ENCODE measurements at regions of chr4 and their contacts with region 1.

Region 1: GRCh38 chr4:17614416-17615299 is at the start of gene MED28:
- DNase-seq: peak; percentile 93
- H3K4me3 Mint-ChIP-seq: peak within 1 kb of the TSS; percentile 96
- H3K27ac Mint-ChIP-seq: peak within 1 kb of the TSS; percentile 97
- H3K4me1 Mint-ChIP-seq: peaks cover 32% of the 10 kb centered on the region
- H3K27me3 Mint-ChIP-seq: peaks cover 2% of the 10 kb centered on the region
- total RNA-seq, gene MED28: 46.6 and 49.6 TPM in 2 replicates

Region 2: GRCh38 chr4:17511950-17512795 is 102.5 kb before region 1 on chr4 and contains the start of gene QDPR:
- intact Hi-C with region 1: loop called (anchors 1 kb)
- DNase-seq: peak; percentile 69
- H3K4me3 Mint-ChIP-seq: peak within 1 kb of the TSS; percentile 98
- H3K27ac Mint-ChIP-seq: peak within 1 kb of the TSS; percentile 92
- H3K4me1 Mint-ChIP-seq: peaks cover 15% of the 10 kb centered on the region
- H3K27me3 Mint-ChIP-seq: peaks cover 19% of the 10 kb centered on the region
- total RNA-seq, gene QDPR: 28.7 and 29.7 TPM in 2 replicates

Region 3: DNA sequence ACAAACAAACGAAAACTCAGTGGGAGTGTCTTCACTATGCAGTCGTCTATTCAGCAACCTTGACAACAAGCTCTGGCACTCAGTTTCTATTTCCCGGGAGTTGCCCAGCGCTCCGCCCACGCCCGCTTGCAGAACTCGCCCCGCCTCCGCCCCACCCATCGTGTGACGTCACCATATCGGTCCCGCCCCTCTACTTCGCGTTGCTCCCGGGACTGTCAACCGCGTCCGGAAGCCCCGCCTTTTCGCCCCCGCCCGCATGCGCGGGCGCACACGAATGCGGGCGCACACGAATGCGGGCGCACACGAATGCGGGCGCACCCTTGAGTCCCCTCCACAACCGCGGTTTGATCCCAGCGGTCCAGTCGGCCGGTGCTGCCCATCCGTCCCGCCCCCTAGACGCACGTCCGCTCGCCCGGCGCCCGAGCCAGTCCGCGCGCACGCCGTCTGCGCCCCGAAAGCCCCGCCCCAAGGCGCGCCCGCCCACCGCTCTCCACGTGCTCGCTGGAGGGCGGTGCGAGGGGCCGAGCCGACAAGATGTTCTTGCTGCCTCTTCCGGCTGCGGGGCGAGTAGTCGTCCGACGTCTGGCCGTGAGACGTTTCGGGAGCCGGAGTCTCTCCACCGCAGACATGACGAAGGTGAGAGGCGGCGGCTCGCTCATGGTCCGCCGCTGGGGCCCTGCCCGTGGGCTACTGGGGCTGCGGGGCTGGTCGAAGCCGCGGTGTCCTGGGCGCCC is 37.6 kb before region 1 on chr4 and contains the start of gene LAP3:
- intact Hi-C with region 1: loop called (anchors 1 kb)
- DNase-seq: peak; percentile 98
- H3K4me3 Mint-ChIP-seq: peak within 1 kb of the TSS; percentile 93
- H3K27ac Mint-ChIP-seq: peak within 1 kb of the TSS; percentile 94
- H3K4me1 Mint-ChIP-seq: peaks cover 38% of the 10 kb centered on the region
- H3K27me3 Mint-ChIP-seq: no peaks in the 10 kb centered on the region
- total RNA-seq, gene LAP3: 108 and 109 TPM in 2 replicates

Region 4: DNA sequence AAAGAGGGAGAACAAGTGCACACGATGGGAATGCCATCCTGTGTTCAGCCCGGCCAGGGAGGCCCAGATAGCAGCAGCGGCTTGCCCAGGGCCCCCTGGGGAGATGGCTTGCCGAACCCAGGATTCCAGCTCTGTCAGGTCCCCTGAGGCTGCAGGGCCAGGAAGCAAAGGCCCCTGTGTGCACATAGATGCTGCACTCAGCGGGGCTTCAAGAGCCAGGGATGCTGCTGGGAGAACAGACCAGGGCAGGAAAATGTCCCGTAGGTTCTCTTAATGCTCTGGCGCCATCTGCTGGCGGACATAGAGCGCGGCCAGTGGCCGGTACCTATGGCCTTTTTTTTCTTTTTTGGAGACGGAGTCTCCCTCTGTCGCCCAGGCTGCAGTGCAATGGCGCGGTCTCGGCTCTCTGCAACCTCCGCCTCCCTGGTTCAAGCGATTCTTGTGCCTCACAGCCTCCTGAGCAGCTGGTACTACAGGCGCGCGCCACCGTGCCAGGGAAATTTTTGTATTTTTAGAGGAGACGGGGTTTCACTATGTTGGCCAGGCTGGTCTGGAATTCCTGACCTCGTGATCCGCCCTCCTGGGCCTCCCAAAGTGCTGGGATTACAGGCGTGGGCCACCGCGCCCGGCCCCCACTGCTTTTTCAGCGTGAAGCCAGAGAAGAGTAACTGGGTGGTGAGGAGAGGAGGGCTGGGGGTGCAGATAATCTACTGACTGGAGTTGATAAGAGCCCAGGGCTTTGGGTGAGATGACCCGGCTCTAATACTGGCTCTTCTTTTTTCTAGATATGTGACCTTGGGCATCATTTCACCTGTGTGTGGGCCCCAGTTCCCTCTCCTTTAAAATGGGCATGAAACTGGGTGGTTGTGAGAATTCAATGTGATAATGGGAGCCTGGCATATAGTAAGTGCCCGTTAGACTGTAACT is 22.3 kb after region 1 on chr4:
- intact Hi-C with region 1: loop called (anchors 2 kb)
- DNase-seq: peak; percentile 48
- H3K4me3 Mint-ChIP-seq: no peak overlapping the region
- H3K27ac Mint-ChIP-seq: no peak overlapping the region
- H3K4me1 Mint-ChIP-seq: no peaks in the 10 kb centered on the region
- H3K27me3 Mint-ChIP-seq: no peaks in the 10 kb centered on the region

Region 5: DNA sequence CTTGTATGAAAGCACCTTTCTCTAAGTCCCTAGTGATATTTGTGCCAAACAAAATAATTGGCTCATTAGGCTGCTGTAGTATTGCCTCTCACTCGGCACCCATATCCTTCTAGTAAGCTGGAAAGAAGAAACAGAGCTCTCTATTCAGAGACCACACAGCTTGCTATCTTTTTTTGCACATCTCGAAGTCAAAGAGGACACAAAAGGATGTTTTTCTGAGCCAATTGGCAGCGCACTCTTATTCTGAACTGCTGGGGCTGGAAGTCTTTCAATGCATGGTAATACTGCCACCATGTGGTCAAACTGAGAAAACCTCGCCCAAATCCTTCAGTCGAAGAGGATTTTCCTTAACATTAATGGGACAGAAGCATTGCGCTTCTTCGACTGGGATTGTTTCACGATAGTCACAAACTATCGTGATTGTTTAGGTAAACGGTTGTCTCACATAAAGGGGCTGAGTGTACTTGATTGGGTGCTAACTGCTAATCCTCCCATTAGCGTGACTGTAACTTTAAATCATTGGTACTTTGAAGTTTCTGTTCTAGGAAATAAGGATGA is 978.9 kb after region 1 on chr4:
- intact Hi-C with region 1: loop called (anchors 1 kb)
- DNase-seq: peak; percentile 14
- H3K4me3 Mint-ChIP-seq: no peak overlapping the region
- H3K27ac Mint-ChIP-seq: no peak overlapping the region
- H3K4me1 Mint-ChIP-seq: peaks cover 8% of the 10 kb centered on the region
- H3K27me3 Mint-ChIP-seq: no peaks in the 10 kb centered on the region